Activated T-helper 1 cell treated with anti-CD3 and anti-CD28 coated beads, Interleukin-12 subunit alpha, Interleukin-12 subunit beta, Interleukin-2, Interleukin-4 antibody, amounts not matched to agents 30 ng/mL and 10 ng/mL and 1 ng/mL, durations not matched to agents 14 hours and 24 hours and 36 hours (primary cell): ENCODE measurements at regions of chr1 and their contacts with region 1.

Region 1: GRCh38 chr1:32107742-32108661 is at the start of gene KPNA6:
- DNase-seq: peak; percentile 89
- H3K4me3 Mint-ChIP-seq: peak within 1 kb of the TSS; percentile 98
- H3K27ac Mint-ChIP-seq: peak within 1 kb of the TSS; percentile 94
- H3K4me1 Mint-ChIP-seq: peaks cover 43% of the 10 kb centered on the region
- H3K27me3 Mint-ChIP-seq: no peaks in the 10 kb centered on the region
- total RNA-seq, gene KPNA6: 76.7 and 78.6 TPM in 2 replicates

Region 2: GRCh38 chr1:31644560-31645273 is 463.3 kb before region 1 on chr1 and contains the start of gene PEF1:
- intact Hi-C with region 1: loop called (anchors 2 kb)
- DNase-seq: peak; percentile 98
- H3K4me3 Mint-ChIP-seq: peak within 1 kb of the TSS; percentile 96
- H3K27ac Mint-ChIP-seq: peak within 1 kb of the TSS; percentile 100
- H3K4me1 Mint-ChIP-seq: peaks cover 21% of the 10 kb centered on the region
- H3K27me3 Mint-ChIP-seq: peaks cover 2% of the 10 kb centered on the region
- total RNA-seq, gene PEF1: 57.6 and 66.1 TPM in 2 replicates

Region 3: GRCh38 chr1:31938174-31938950 is 169.6 kb before region 1 on chr1 and contains the start of gene PTP4A2:
- intact Hi-C with region 1: loop called (anchors 5 kb)
- DNase-seq: peak; percentile 88
- H3K4me3 Mint-ChIP-seq: peak within 1 kb of the TSS; percentile 100
- H3K27ac Mint-ChIP-seq: peak within 1 kb of the TSS; percentile 99
- H3K4me1 Mint-ChIP-seq: peaks cover 63% of the 10 kb centered on the region
- H3K27me3 Mint-ChIP-seq: no peaks in the 10 kb centered on the region
- total RNA-seq, gene PTP4A2: 390 and 421 TPM in 2 replicates

Region 4: GRCh38 chr1:32013386-32014198 is 94.4 kb before region 1 on chr1 and contains the start of gene KHDRBS1:
- intact Hi-C with region 1: loop called (anchors 2 kb)
- DNase-seq: peak; percentile 99
- H3K4me3 Mint-ChIP-seq: peak within 1 kb of the TSS; percentile 99
- H3K27ac Mint-ChIP-seq: peak within 1 kb of the TSS; percentile 97
- H3K4me1 Mint-ChIP-seq: peaks cover 31% of the 10 kb centered on the region
- H3K27me3 Mint-ChIP-seq: no peaks in the 10 kb centered on the region
- total RNA-seq, gene KHDRBS1: 156 and 158 TPM in 2 replicates

Region 5: DNA sequence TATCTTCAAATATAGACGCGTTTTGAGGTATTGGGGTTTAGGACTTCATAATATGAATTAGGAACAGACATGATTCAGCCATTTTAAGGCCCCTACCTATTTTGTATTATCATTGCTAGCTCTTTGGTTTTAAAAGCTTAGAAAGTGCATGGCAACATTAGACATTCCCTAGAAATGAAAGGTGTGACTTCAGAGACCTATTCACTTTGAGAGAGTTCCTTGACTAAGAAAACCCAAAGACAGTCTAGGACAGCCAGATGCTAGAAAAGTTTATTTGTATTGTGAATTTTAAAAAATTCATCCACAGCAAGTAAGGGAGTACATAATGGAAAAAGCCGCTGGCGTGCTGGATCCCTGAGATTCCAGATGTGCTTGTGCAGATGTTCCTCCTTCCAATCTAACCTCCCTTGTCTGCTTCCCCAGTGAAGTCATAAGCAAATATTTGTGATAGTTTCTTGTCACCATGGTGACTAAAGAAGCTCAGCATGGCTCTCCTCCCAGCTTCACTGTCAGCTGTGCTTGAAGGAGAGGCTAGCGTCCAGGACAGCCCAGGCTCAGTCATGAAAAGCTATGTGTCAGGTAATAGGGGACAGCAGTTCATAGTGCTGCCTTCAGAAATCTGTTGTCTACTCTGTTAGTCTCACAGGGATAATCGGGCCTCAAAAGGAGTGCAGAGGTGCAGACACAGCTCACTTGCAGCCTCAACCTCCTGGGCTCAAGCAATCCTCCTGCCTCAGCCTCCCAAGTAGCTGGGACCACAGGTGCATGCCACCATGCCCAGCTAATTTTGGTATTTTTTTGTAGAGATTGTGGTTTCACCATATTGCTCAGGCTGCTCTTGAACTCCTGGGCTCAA is 34.7 kb after region 1 on chr1:
- intact Hi-C with region 1: loop called (anchors 1 kb)
- DNase-seq: no peak
- H3K4me3 Mint-ChIP-seq: no peak overlapping the region
- H3K27ac Mint-ChIP-seq: no peak overlapping the region
- H3K4me1 Mint-ChIP-seq: peaks cover 39% of the 10 kb centered on the region
- H3K27me3 Mint-ChIP-seq: no peaks in the 10 kb centered on the region

Region 6: DNA sequence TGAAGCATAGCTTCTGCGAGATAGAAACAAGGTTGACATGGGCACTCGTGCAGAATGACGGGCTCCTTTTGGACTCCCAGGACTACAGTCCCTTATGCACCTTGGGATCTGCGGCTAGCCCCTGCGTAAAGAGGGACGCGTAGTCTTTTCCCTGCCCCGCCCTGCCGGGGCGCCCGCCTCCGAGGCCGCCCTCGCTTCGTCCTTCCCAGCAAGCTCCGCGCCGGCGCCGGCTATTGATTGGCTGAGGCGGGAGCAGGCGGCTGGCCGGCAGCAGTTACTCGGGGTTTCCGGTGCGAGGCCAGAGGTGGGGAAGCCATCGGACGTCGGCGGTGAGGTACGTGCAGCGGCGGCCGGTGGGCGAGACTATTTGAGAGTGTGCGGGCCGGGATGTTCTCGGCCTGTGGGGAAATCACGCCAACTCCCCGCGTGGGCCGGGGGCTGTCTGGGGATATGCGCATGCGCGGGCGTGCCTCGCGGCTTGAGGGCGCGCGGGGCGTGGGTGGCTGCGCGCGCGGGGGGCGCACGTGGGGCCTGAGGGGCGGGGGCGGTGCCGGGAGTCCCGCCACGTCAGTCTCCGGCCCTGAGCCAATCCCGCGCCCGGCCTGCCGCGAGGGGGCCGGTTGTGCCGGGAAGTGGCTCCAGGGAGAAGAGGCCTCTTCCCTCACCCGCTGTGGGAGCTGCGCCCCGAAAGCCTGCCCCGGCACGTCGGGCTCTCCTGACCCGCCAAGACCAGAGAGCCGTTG is 71.6 kb after region 1 on chr1 and contains the start of gene TXLNA:
- intact Hi-C with region 1: loop called (anchors 1 kb)
- DNase-seq: peak; percentile 89
- H3K4me3 Mint-ChIP-seq: peak within 1 kb of the TSS; percentile 96
- H3K27ac Mint-ChIP-seq: peak within 1 kb of the TSS; percentile 93
- H3K4me1 Mint-ChIP-seq: peaks cover 47% of the 10 kb centered on the region
- H3K27me3 Mint-ChIP-seq: no peaks in the 10 kb centered on the region
- total RNA-seq, gene TXLNA: 109 and 110 TPM in 2 replicates

Region 7: DNA sequence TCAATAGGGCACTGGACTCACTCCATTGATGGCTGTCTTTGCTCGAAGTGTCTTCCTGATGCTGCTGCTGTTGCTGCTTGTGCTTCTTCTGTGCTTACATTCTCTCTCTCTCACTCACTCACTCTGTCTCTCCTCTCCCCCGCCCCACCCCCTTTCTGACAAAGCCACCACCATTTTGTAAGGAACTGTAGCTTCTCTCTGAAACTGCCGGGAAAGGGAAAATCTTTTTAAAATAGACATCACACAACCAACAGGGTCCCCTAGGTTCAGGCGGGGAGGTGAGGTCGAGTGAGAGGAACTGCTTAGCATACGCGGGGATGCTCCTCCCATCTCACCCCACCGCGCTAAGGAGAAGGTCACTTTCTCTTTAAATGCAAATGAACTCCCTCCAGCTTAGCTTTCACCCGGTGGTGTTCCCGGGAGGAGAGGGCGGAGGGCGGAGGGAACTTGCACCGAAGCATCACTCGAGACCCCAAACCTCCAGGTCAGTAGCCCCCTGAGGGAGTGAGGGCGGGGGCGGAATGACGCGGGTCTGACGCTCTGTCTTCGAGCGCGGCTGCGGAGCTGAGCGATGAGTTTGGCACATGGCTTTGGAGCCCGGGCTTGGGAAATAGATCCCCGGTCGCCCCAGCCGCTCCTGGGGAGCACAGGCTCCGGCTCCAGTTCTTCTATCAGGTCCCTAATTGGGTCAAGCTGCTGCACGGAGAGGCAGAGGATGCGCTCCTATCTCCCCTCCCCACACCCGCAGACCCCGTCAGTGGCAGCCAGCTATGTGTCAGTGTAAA is 92.4 kb after region 1 on chr1 and contains the start of gene CCDC28B:
- intact Hi-C with region 1: loop called (anchors 2 kb)
- DNase-seq: peak; percentile 55
- H3K4me3 Mint-ChIP-seq: peak within 1 kb of the TSS; percentile 92
- H3K27ac Mint-ChIP-seq: peak within 1 kb of the TSS; percentile 97
- H3K4me1 Mint-ChIP-seq: peaks cover 69% of the 10 kb centered on the region
- H3K27me3 Mint-ChIP-seq: no peaks in the 10 kb centered on the region
- total RNA-seq, gene CCDC28B: 28.2 and 32.6 TPM in 2 replicates